ENCODE measurements at regions of chr16 and their contacts with region 1.

Region 1: DNA sequence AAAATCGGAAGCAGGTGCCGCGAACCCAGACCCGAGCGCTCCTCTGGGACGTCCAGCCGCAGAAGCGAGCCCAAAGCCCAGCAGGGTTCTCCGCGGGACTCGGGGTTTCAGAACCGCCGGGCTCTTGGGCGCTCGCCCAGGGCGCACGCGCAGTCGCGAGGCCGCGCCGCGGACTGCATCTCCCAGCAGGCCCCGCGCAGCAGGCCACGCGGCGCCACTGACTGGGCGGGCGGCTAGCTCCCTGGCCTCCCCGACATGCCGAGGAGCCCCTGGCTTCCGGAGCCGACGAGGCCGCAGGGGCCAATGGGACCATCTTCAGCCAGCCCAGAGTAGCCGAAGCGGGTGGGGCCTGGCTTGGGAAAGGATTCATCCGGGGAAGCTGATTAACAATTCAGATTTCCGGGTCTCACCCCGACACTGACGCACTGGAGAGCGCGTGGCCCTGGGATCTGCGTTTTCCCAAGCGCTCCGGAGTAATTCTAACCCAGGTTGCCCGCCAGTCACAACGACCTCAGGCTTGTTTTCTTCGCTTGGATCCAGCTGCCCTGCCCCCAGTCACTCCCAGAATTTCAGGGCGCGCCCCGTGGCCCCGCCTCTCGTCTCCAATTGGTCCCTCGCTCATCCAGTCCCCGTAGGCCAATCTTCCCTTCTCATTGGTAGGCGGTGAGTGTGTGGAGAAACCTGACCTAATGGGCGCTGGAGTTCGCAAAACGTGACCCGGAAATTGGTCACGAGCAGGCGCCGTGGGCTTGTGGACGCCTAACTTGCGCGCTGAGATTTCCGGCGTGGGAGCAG is at the start of gene ZNF263:
- DNase-seq: peak; percentile 82 to 98 (median 92)
- ATAC-seq: peak; percentile 88
- H3K4me3 ChIP-seq: peak within 1 kb of the TSS; percentile 84 to 92
- H3K4me3 Mint-ChIP-seq: peak within 1 kb of the TSS; percentile 89
- H3K27ac ChIP-seq: peak within 1 kb of the TSS; percentile 96 to 100
- H3K27ac Mint-ChIP-seq: peak within 1 kb of the TSS; percentile 96
- H3K4me1 ChIP-seq: peaks cover 28% of the 10 kb centered on the region
- H3K4me1 Mint-ChIP-seq: peaks cover 56% of the 10 kb centered on the region
- H3K27me3 ChIP-seq: no peaks in the 10 kb centered on the region
- H3K27me3 Mint-ChIP-seq: no peaks in the 10 kb centered on the region
- CTCF ChIP-seq: no peak
- total RNA-seq, gene ZNF263: 44.2 to 49.0 TPM

Region 2: GRCh38 chr16:3003582-3004302 is 279.2 kb before region 1 on chr16:
- CTCF ChIA-PET with region 1: no interaction called
- POLR2A ChIA-PET with region 1: no interaction called
- intact Hi-C with region 1: no loop called
- DNase-seq: peak; percentile 91 to 99 (median 95)
- ATAC-seq: peak; percentile 99
- H3K4me3 ChIP-seq: no peak overlapping the region
- H3K4me3 Mint-ChIP-seq: peak overlapping the region; percentile 81
- H3K27ac ChIP-seq: no peak overlapping the region
- H3K27ac Mint-ChIP-seq: no peak overlapping the region
- H3K4me1 ChIP-seq: peaks cover 21% of the 10 kb centered on the region
- H3K4me1 Mint-ChIP-seq: peaks cover 28% of the 10 kb centered on the region
- H3K27me3 ChIP-seq: peaks cover 0 to 4% of the 10 kb centered on the region in 2 experiments
- H3K27me3 Mint-ChIP-seq: no peaks in the 10 kb centered on the region
- CTCF ChIP-seq: peak; percentile 54

Region 3: GRCh38 chr16:3123986-3124886 is 158.7 kb before region 1 on chr16:
- CTCF ChIA-PET with region 1: no interaction called
- POLR2A ChIA-PET with region 1: no interaction called
- intact Hi-C with region 1: loop called (anchors 1 to 2 kb)
- DNase-seq: peak; percentile 88 to 98 (median 97)
- ATAC-seq: peak; percentile 90
- H3K4me3 ChIP-seq: peak overlapping the region; percentile 72 to 89
- H3K4me3 Mint-ChIP-seq: peak overlapping the region; percentile 98
- H3K27ac ChIP-seq: peak overlapping the region; percentile 44 to 72
- H3K27ac Mint-ChIP-seq: peak overlapping the region; percentile 95
- H3K4me1 ChIP-seq: peaks cover 30% of the 10 kb centered on the region
- H3K4me1 Mint-ChIP-seq: peaks cover 45% of the 10 kb centered on the region
- H3K27me3 ChIP-seq: no peaks in the 10 kb centered on the region
- H3K27me3 Mint-ChIP-seq: no peaks in the 10 kb centered on the region
- CTCF ChIP-seq: no peak

Region 4: GRCh38 chr16:3182608-3183444 is 100.1 kb before region 1 on chr16:
- CTCF ChIA-PET with region 1: no interaction called
- POLR2A ChIA-PET with region 1: interaction called, 6 read pairs
- intact Hi-C with region 1: loop called in 1 of 2 experiments (anchors 5 kb)
- DNase-seq: peak in 6 of 9 experiments; percentile 38 to 74 (median 64)
- ATAC-seq: peak; percentile 64
- H3K4me3 ChIP-seq: peak overlapping the region; percentile 38 to 43
- H3K4me3 Mint-ChIP-seq: peak overlapping the region; percentile 78
- H3K27ac ChIP-seq: no peak overlapping the region
- H3K27ac Mint-ChIP-seq: peak overlapping the region; percentile 66
- H3K4me1 ChIP-seq: peaks cover 19% of the 10 kb centered on the region
- H3K4me1 Mint-ChIP-seq: peaks cover 19% of the 10 kb centered on the region
- H3K27me3 ChIP-seq: peaks cover 31 to 38% of the 10 kb centered on the region in 2 experiments
- H3K27me3 Mint-ChIP-seq: peaks cover 65% of the 10 kb centered on the region
- CTCF ChIP-seq: no peak

Region 5: GRCh38 chr16:3305109-3306068 is 22.5 kb after region 1 on chr16 and contains the starts of genes TIGD7 and ZNF75A:
- CTCF ChIA-PET with region 1: interaction called, 5 read pairs
- POLR2A ChIA-PET with region 1: interaction called, 31 read pairs
- intact Hi-C with region 1: loop called (anchors 1 kb)
- DNase-seq: peak; percentile 60 to 94 (median 83)
- ATAC-seq: peak; percentile 97
- H3K4me3 ChIP-seq: peak within 1 kb of the TSS; percentile 90 to 93
- H3K4me3 Mint-ChIP-seq: peak within 1 kb of the TSS; percentile 83
- H3K27ac ChIP-seq: peak within 1 kb of the TSS; percentile 86 to 91
- H3K27ac Mint-ChIP-seq: peak within 1 kb of the TSS; percentile 90
- H3K4me1 ChIP-seq: peaks cover 14% of the 10 kb centered on the region
- H3K4me1 Mint-ChIP-seq: peaks cover 30% of the 10 kb centered on the region
- H3K27me3 ChIP-seq: no peaks in the 10 kb centered on the region
- H3K27me3 Mint-ChIP-seq: no peaks in the 10 kb centered on the region
- CTCF ChIP-seq: no peak
- total RNA-seq, gene TIGD7: 4.1 to 4.2 TPM
- total RNA-seq, gene ZNF75A: 59.6 to 61.3 TPM

Region 6: GRCh38 chr16:3443108-3444031 is 160.4 kb after region 1 on chr16 and contains the starts of genes NAA60 and ZNF597:
- CTCF ChIA-PET with region 1: no interaction called
- POLR2A ChIA-PET with region 1: interaction called, 5 read pairs
- intact Hi-C with region 1: loop called in 1 of 2 experiments (anchors 2 kb)
- DNase-seq: peak; percentile 41 to 92 (median 78)
- ATAC-seq: peak; percentile 89
- H3K4me3 ChIP-seq: peak within 1 kb of the TSS; percentile 51 to 75
- H3K4me3 Mint-ChIP-seq: peak within 1 kb of the TSS; percentile 94
- H3K27ac ChIP-seq: peak within 1 kb of the TSS; percentile 61 to 87
- H3K27ac Mint-ChIP-seq: peak within 1 kb of the TSS; percentile 96
- H3K4me1 ChIP-seq: peaks cover 13% of the 10 kb centered on the region
- H3K4me1 Mint-ChIP-seq: peaks cover 32% of the 10 kb centered on the region
- H3K27me3 ChIP-seq: no peaks in the 10 kb centered on the region
- H3K27me3 Mint-ChIP-seq: no peaks in the 10 kb centered on the region
- CTCF ChIP-seq: no peak
- total RNA-seq, gene NAA60: 45.4 to 48.0 TPM
- total RNA-seq, gene ZNF597: 4.5 to 4.6 TPM